Prostate gland (tissue), 2 donors: ENCODE measurements at regions of chr2 and their contacts with region 1.

Region 1: DNA sequence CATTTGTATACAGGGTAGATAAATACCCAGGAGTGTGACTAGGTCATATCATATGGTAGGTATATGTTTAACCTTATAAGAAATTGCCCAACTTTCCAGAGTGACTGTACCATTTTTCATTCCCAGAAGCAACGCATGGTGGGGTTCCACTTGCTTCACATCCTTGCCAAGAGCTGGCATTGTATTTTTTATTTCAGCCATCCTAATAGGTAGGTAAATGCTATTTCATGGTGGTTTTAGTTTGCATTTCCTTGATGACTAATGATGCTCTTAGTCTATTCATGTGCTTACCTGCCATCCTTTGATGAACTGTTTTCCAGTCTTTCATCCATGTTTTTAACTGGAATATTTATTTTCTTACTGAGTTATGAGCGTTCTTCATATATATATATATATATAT is 51.9 kb downstream of the MAP4K3 start:
- DNase-seq: no peak
- H3K4me3 ChIP-seq: no peak overlapping the region
- H3K27ac ChIP-seq: no peak overlapping the region
- H3K4me1 ChIP-seq: no peaks in the 10 kb centered on the region
- H3K27me3 ChIP-seq: no peaks in the 10 kb centered on the region
- CTCF ChIP-seq: no peak
- POLR2A ChIP-seq: no peak

Region 2: GRCh38 chr2:39436592-39437510 is 51.7 kb after region 1 on chr2 and contains the start of gene MAP4K3:
- intact Hi-C with region 1: loop called (anchors 5 kb)
- DNase-seq: peak; percentile 92
- H3K4me3 ChIP-seq: peak within 1 kb of the TSS; percentile 79 to 94
- H3K27ac ChIP-seq: peak within 1 kb of the TSS; percentile 94 to 98
- H3K4me1 ChIP-seq: peaks cover 6% of the 10 kb centered on the region
- H3K27me3 ChIP-seq: no peaks in the 10 kb centered on the region
- CTCF ChIP-seq: no peak
- POLR2A ChIP-seq: peak; percentile 89
- total RNA-seq, gene MAP4K3: 34.3 to 41.8 TPM